Transverse colon (tissue), 4 donors: ENCODE measurements at regions of chr1 and their contacts with region 1.

Region 1: DNA sequence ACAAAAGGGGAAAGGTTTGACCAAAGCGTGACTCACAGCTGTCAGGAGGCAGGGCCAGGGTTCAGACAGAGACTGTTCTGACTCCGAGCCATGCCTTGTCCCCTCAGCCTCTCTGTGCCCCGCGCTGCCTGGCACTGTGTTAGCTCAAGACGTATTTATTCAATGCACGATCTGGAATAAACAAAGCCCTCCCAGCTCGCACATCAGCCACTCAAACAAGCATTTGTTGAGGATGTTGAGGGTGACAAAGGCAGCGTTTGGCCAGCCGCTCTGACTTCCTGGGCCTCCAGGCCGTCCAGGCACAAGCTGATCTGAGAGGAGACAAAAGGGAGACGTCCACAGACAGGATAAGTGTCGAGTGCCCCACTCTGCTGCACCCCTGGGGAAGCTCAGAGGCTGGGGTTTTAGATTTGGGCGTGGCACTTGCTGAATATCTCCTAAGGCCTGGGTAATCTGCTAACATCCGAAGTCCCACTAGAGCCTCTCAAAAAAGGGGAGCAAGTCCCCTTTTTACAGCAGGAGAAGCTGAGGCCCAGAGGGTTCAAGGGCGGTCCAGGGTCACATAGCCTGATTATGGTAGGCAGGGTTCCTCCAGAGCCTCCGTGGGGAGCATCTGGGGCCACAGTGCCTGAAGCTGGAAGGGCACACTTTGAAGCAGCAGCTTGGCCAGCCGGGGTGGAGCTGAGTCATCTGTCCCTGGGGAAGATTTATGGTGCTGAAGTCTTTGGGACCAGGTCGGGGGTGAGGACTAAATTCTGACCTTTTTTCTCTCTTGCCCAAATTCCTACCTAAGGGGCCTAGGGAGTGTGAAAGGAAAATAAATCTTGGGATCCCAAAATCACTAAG is 95.9 kb downstream of the SPSB1 start:
- DNase-seq: peak; percentile 39
- H3K4me3 ChIP-seq: no peak overlapping the region
- H3K27ac ChIP-seq: peak overlapping the region in 2 of 4 donors; percentile 28 to 36
- H3K4me1 ChIP-seq: peaks cover 28 to 30% (median 29%) of the 10 kb centered on the region in 4 donors
- H3K27me3 ChIP-seq: no peaks in the 10 kb centered on the region
- CTCF ChIP-seq: no peak
- EP300 ChIP-seq: no peak
- POLR2A ChIP-seq: no peak

Region 2: DNA sequence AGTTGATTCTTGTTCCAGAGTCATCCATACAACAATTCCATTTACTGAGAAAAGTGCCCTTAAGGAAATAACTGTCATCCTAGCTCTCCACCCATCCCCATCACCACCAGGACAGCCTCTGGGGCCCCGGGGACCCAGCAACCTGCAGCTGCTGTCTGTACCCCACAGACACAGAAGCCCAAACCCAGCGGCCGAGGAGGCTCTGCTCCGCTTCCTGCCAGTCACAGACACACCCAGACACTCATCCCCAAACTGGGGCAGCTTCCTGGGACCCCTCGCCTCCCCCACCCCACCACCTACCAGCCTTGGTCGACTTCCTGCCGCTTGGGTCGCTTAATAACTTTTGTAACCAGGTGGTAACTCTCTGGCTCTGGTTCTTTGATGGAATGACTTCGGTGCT is 29.1 kb after region 1 on chr1:
- in situ Hi-C with region 1: no loop called
- intact Hi-C with region 1: loop called (anchors 1 kb)
- DNase-seq: no peak
- H3K4me3 ChIP-seq: no peak overlapping the region
- H3K27ac ChIP-seq: no peak overlapping the region
- H3K4me1 ChIP-seq: peaks cover 12 to 18% (median 12%) of the 10 kb centered on the region in 4 donors
- H3K27me3 ChIP-seq: no peaks in the 10 kb centered on the region
- CTCF ChIP-seq: no peak
- EP300 ChIP-seq: no peak
- POLR2A ChIP-seq: no peak